Dendritic cell treated with granulocyte-macrophage colony-stimulating factor and Interleukin-4, amounts not matched to agents 40 ng/mL and 50 ng/mL, for 4 days (primary cell): ENCODE measurements at regions of chr5 and their contacts with region 1.

Region 1: DNA sequence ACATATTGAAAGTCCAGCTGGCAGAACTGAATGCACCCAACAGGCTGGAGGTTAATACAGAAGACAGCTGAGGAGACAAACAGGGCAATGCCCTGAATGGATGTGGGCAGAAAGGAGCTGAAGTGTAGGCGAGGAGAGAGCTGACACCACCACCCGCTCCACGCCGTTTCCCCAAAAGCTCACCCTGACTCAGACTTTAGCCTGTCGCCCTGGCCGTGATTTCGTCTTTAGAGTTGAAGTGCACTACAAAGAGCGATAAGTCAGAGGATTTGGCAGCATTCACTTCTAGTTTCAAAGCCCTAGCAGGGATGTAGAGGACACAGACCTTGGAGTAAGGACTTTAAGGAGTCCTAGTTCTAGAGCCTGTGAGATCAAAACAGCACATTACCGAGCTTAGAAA is 2.2 kb upstream of the ERAP1 start:
- H3K4me3 Mint-ChIP-seq: no peak overlapping the region
- H3K27ac Mint-ChIP-seq: peak overlapping the region; percentile 33
- H3K4me1 Mint-ChIP-seq: peaks cover 28% of the 10 kb centered on the region
- H3K27me3 Mint-ChIP-seq: no peaks in the 10 kb centered on the region

Region 2: GRCh38 chr5:96844476-96844990 is 34.6 kb after region 1 on chr5:
- intact Hi-C with region 1: loop called (anchors 5 kb)
- H3K4me3 Mint-ChIP-seq: no peak overlapping the region
- H3K27ac Mint-ChIP-seq: peak overlapping the region; percentile 71
- H3K4me1 Mint-ChIP-seq: peaks cover 50% of the 10 kb centered on the region
- H3K27me3 Mint-ChIP-seq: no peaks in the 10 kb centered on the region

Region 3: GRCh38 chr5:96876292-96876850 is 66.5 kb after region 1 on chr5 and contains the start of gene ERAP2:
- intact Hi-C with region 1: loop called (anchors 2 kb)
- H3K4me3 Mint-ChIP-seq: peak within 1 kb of the TSS; percentile 79
- H3K27ac Mint-ChIP-seq: peak within 1 kb of the TSS; percentile 90
- H3K4me1 Mint-ChIP-seq: peaks cover 28% of the 10 kb centered on the region
- H3K27me3 Mint-ChIP-seq: no peaks in the 10 kb centered on the region

Region 4: DNA sequence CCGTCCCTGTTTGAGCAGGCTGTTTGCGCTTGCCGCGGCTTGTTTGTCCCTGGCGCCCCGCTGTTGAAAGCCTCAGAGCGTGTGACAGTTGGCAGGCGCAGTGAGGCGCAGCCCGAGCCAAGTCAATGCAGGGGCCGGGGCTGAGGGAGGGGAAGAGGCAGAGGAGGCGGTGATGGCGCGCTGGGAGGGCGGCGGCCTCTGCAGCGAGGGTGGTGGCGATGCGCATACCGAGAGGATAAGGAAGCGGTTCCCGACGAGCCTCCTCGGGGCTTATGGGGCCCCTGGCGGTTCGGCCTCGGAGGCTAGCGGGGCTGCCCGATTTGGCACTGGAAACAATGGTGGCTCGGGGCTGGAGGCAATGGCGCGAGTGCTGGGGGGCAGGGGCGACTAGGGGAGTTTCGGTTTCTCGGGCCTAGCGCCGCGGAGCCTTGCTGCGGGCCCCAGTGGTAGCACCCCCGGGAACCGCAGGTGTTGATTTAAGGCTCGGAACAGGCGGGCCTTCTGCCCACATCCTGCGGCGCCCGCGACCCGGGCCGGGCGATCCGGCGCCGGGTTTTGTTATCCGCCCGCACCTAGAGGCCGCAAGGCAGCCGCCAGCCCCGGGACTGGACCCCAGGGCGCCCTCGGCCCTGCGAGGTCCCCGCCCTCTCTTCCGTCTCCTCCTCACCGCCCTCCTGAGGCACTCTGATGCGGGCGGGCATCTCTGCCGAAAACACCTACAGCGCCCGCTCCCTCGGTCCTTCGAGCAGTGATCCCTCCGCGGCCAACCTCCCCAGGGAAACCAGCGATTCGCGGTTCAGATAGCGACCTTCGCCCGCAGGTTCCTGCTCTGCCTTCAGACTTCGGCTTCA is 125.0 kb after region 1 on chr5:
- intact Hi-C with region 1: loop called (anchors 1 kb)
- H3K4me3 Mint-ChIP-seq: peak overlapping the region; percentile 88
- H3K27ac Mint-ChIP-seq: peak overlapping the region; percentile 99
- H3K4me1 Mint-ChIP-seq: peaks cover 69% of the 10 kb centered on the region
- H3K27me3 Mint-ChIP-seq: no peaks in the 10 kb centered on the region

Region 5: DNA sequence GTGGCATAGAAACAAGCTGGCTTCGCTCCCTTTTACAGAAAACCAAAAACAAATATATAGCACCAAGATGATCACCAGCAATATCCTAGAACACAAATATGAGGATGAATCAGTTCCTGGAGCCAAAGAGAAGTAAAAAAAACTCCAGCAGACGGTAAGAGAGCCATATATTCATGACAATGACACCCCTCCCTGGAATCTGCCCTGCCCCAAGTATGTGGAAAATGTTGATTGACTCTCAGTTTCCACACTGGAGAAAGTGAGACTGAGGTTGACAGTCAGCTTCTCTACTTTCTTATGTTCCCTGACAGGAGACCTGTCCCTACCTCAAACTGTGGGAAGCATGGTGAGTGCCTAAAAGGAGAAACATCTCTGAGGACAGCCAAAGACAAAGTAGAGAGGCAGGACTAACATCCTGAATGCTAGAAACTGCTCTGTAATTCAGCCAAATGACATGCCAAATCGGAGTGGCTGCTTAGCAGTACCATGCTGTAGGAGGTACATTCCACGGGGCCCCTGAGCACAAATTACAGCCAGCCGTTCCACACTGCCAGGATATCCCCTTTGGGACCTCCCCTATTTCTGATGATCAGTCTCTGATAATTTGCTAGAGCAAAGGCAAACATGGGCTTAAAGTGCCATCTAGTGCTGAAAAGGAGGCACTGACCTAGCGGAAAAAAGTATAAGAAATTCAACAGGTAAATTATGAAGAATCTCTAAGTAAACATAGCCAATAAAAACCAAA is 1539.5 kb after region 1 on chr5:
- intact Hi-C with region 1: no loop called
- H3K4me3 Mint-ChIP-seq: no peak overlapping the region
- H3K27ac Mint-ChIP-seq: no peak overlapping the region
- H3K4me1 Mint-ChIP-seq: no peaks in the 10 kb centered on the region
- H3K27me3 Mint-ChIP-seq: no peaks in the 10 kb centered on the region